CD8-positive, alpha-beta T cell (primary cell): ENCODE measurements at regions of chr9 and their contacts with region 1.

Region 1: GRCh38 chr9:76369583-76369982 is 24.6 kb downstream of the RFK start:
- DNase-seq: no peak
- ATAC-seq: no peak
- H3K4me3 ChIP-seq: no peak overlapping the region
- H3K4me3 Mint-ChIP-seq: no peak overlapping the region
- H3K27ac ChIP-seq: no peak overlapping the region
- H3K27ac Mint-ChIP-seq: no peak overlapping the region
- H3K4me1 ChIP-seq: no peaks in the 10 kb centered on the region
- H3K4me1 Mint-ChIP-seq: no peaks in the 10 kb centered on the region
- H3K27me3 ChIP-seq: no peaks in the 10 kb centered on the region
- H3K27me3 Mint-ChIP-seq: no peaks in the 10 kb centered on the region
- CTCF ChIP-seq: no peak

Region 2: GRCh38 chr9:76292246-76292645 is 77.3 kb before region 1 on chr9:
- CTCF ChIA-PET with region 1: no interaction called
- POLR2A ChIA-PET with region 1: no interaction called
- intact Hi-C with region 1: no loop called
- DNase-seq: no peak
- ATAC-seq: no peak
- H3K4me3 ChIP-seq: no peak overlapping the region
- H3K4me3 Mint-ChIP-seq: no peak overlapping the region
- H3K27ac ChIP-seq: no peak overlapping the region
- H3K27ac Mint-ChIP-seq: no peak overlapping the region
- H3K4me1 ChIP-seq: no peaks in the 10 kb centered on the region
- H3K4me1 Mint-ChIP-seq: no peaks in the 10 kb centered on the region
- H3K27me3 ChIP-seq: no peaks in the 10 kb centered on the region
- H3K27me3 Mint-ChIP-seq: no peaks in the 10 kb centered on the region
- CTCF ChIP-seq: no peak

Region 3: DNA sequence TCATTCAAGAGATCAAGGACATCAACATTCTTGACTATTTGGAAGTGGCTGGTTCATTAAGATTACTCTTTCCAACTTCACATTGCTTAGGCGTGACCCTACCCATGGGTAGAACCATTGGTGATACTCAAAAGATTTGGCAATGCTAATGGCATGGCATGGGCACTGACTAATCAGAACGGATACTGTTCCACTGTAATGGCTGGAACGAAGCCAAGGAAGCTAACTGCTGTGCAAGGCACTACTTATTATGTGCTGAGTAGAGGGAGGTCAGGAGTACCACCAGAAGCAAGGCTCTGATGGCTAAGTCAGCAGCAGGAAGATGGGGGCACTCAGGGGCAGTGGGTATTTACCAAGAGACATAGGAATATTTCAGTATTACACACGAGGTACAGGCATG is 1246.6 kb after region 1 on chr9:
- CTCF ChIA-PET with region 1: no interaction called
- POLR2A ChIA-PET with region 1: no interaction called
- intact Hi-C with region 1: loop called in 1 of 2 experiments (anchors 10 kb)
- DNase-seq: no peak
- ATAC-seq: no peak
- H3K4me3 ChIP-seq: no peak overlapping the region
- H3K4me3 Mint-ChIP-seq: no peak overlapping the region
- H3K27ac ChIP-seq: no peak overlapping the region
- H3K27ac Mint-ChIP-seq: no peak overlapping the region
- H3K4me1 ChIP-seq: no peaks in the 10 kb centered on the region
- H3K4me1 Mint-ChIP-seq: no peaks in the 10 kb centered on the region
- H3K27me3 ChIP-seq: no peaks in the 10 kb centered on the region
- H3K27me3 Mint-ChIP-seq: peaks cover 2% of the 10 kb centered on the region
- CTCF ChIP-seq: no peak